WTC11 (cell line): ENCODE measurements at regions of chr20 and their contacts with region 1.

Region 1: GRCh38 chr20:2752567-2753460 is 47.6 kb downstream of the CPXM1 start:
- DNase-seq: peak; percentile 77
- ATAC-seq: peak; percentile 22
- H3K4me3 Mint-ChIP-seq: peak overlapping the region; percentile 77
- H3K27ac Mint-ChIP-seq: no peak overlapping the region
- H3K4me1 Mint-ChIP-seq: peaks cover 37% of the 10 kb centered on the region
- H3K27me3 Mint-ChIP-seq: peaks cover 73% of the 10 kb centered on the region
- CTCF ChIP-seq: peak; percentile 80

Region 2: DNA sequence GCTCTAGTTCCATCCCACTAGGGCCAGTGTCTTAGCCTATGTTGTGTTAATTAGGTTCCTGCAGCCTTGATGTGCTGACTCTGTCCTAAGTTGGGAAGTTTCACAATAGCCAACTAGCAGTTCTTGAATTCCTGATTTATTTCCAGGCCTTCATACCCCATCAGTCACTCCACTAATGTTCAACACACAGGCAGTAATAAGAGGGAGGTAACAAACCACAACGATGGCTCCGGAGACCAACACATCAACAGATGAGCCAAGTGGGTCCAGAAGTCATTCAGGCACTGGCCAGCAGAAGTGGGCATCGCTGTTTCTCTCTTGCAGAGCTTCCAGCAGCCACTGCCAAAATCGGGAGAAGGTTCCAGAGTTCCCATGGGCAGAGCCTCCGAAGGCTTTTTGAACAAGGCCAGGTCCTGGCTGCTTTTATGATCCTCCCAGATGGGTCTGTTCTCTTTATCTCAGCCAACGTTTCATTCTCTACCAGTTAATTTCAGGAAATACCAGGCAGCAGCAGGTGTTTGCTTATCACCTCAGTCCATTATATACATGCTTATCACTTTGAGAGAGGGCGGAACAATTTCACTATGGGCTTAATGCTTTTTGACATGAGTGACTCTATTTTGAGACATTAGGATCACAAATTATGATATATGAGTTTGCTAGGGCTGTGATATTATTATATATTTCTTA is 148.9 kb before region 1 on chr20:
- CTCF ChIA-PET with region 1: no interaction called
- POLR2A ChIA-PET with region 1: no interaction called
- DNase-seq: no peak
- ATAC-seq: no peak
- H3K4me3 Mint-ChIP-seq: no peak overlapping the region
- H3K27ac Mint-ChIP-seq: no peak overlapping the region
- H3K4me1 Mint-ChIP-seq: peaks cover 6% of the 10 kb centered on the region
- H3K27me3 Mint-ChIP-seq: peaks cover 7% of the 10 kb centered on the region
- CTCF ChIP-seq: no peak

Region 3: DNA sequence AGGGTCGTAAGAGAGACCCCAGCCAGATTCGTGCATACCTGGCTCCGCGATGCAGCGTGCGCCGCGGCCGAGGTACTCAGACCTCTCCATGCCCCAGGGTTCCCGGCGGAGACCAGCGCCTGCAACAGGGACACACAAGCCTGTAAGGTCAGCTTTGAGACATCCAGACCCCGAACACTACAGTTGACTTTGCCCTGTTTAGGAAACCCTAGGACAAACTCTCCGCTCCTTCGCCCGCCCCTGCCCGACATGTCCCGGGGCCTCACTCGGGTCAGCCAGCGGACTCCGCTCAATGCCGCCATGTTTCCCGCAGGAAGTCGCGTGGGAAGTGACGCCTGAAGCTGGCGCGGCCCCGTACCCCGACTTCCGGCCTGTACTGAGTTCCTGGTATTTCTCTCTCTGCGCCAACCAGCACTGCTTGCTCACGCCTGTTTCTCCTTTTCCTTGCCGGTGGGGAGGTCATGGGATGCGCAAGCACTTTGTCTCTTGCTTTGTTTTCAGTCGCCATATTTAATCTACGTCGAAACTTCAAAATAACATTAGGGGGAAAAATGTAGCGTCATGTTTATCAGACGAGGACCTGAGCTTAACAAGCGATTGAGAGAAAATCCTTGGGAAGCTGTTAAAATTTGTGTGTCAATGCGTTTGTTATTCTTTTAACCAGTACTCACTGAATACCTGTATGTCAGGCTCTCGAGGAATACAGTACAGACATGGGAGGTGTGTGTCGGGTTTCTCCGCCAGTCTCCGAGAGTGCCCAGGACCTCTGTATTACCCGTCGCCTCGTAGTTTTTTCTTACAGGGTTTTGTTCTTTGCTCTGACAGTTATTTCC is 88.7 kb before region 1 on chr20 and contains the start of gene IDH3B:
- CTCF ChIA-PET with region 1: no interaction called
- POLR2A ChIA-PET with region 1: no interaction called
- DNase-seq: peak; percentile 88
- ATAC-seq: peak; percentile 90
- H3K4me3 Mint-ChIP-seq: peak within 1 kb of the TSS; percentile 98
- H3K27ac Mint-ChIP-seq: peak within 1 kb of the TSS; percentile 100
- H3K4me1 Mint-ChIP-seq: peaks cover 6% of the 10 kb centered on the region
- H3K27me3 Mint-ChIP-seq: peaks cover 24% of the 10 kb centered on the region
- CTCF ChIP-seq: no peak
- total RNA-seq, gene IDH3B: 101 to 136 TPM (median 107 TPM) in 3 replicates

Region 4: GRCh38 chr20:2693286-2694000 is 59.4 kb before region 1 on chr20:
- CTCF ChIA-PET with region 1: interaction called, 120 read pairs
- POLR2A ChIA-PET with region 1: interaction called, 3 read pairs
- DNase-seq: peak; percentile 46
- ATAC-seq: peak; percentile 60
- H3K4me3 Mint-ChIP-seq: peak overlapping the region; percentile 44
- H3K27ac Mint-ChIP-seq: no peak overlapping the region
- H3K4me1 Mint-ChIP-seq: peaks cover 27% of the 10 kb centered on the region
- H3K27me3 Mint-ChIP-seq: peaks cover 86% of the 10 kb centered on the region
- CTCF ChIP-seq: no peak

Region 5: GRCh38 chr20:2713285-2713684 is 39.5 kb before region 1 on chr20:
- CTCF ChIA-PET with region 1: interaction called, 10 read pairs
- POLR2A ChIA-PET with region 1: no interaction called
- DNase-seq: no peak
- ATAC-seq: peak; percentile 71
- H3K4me3 Mint-ChIP-seq: no peak overlapping the region
- H3K27ac Mint-ChIP-seq: no peak overlapping the region
- H3K4me1 Mint-ChIP-seq: peaks cover 5% of the 10 kb centered on the region
- H3K27me3 Mint-ChIP-seq: peaks cover 2% of the 10 kb centered on the region; the same call in 1 of the 2 replicates
- CTCF ChIP-seq: no peak

Region 6: DNA sequence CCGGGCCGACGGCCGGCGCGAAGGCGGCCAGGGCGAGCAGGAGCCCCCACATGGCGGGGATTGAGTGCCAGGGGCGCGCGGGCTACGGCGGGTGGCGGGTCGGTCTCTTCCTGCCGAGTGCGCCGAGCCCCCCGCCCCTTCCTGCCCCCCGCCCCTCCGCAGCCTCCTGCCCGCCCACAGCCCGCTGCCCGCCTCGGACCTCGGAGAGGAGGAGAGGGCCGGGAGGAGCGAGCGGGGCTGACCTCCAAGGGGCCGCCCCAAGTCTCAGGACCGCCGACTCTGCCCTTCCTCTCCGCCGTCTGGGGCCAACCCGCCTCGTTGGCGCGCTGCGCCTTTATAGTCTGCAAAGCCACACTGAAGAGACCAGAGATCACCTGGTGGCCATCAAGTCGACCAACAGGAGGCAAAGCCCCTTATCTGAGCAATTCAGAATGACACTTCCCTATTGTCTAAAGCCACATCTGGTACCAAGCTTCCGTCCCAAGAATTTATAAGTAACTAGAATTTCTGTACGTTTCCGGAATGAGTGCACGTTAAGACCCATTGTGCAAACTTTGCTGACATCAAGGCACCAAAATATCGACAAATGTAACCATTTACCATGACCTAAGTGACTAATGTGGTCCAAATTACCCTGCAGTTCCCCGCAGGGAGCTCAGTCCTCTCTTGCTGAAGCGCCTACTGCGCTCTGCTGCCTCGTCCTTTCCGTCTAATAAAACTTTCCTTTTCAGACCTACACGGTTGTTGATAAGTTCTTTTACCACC is 47.9 kb after region 1 on chr20 and contains the start of gene CPXM1:
- CTCF ChIA-PET with region 1: interaction called, 24 read pairs
- POLR2A ChIA-PET with region 1: no interaction called
- DNase-seq: peak; percentile 77
- ATAC-seq: peak; percentile 78
- H3K4me3 Mint-ChIP-seq: peak within 1 kb of the TSS; percentile 95
- H3K27ac Mint-ChIP-seq: peak within 1 kb of the TSS; percentile 75
- H3K4me1 Mint-ChIP-seq: peaks cover 31% of the 10 kb centered on the region
- H3K27me3 Mint-ChIP-seq: peaks cover 57% of the 10 kb centered on the region
- CTCF ChIP-seq: no peak
- total RNA-seq, gene CPXM1: 51.2 to 57.1 TPM (median 54.6 TPM) in 3 replicates

Region 7: DNA sequence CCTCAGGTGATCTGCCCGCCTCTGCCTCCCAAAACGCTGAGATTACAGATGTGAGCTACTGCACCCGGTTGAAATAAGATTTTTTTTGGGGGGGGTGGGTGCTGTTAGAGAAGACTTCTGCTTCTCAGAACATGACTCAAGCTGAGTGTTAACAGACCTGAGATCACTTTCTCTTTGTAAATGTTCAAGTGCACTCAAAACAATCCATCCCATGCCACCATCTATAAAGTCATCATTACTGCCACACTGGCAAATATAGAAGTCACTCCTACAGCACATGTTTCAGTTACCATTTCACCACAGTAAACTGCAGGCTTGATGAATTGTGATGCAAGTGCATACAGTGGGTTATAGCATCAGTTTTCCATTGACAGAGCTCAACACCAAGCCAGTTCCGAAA is 96.7 kb after region 1 on chr20:
- CTCF ChIA-PET with region 1: interaction called, 64 read pairs
- POLR2A ChIA-PET with region 1: interaction called, 4 read pairs
- DNase-seq: no peak
- ATAC-seq: no peak
- H3K4me3 Mint-ChIP-seq: no peak overlapping the region
- H3K27ac Mint-ChIP-seq: no peak overlapping the region
- H3K4me1 Mint-ChIP-seq: peaks cover 4% of the 10 kb centered on the region
- H3K27me3 Mint-ChIP-seq: no peaks in the 10 kb centered on the region
- CTCF ChIP-seq: no peak